BJ (cell line): ENCODE measurements at regions of chr10 and their contacts with region 1.

Region 1: DNA sequence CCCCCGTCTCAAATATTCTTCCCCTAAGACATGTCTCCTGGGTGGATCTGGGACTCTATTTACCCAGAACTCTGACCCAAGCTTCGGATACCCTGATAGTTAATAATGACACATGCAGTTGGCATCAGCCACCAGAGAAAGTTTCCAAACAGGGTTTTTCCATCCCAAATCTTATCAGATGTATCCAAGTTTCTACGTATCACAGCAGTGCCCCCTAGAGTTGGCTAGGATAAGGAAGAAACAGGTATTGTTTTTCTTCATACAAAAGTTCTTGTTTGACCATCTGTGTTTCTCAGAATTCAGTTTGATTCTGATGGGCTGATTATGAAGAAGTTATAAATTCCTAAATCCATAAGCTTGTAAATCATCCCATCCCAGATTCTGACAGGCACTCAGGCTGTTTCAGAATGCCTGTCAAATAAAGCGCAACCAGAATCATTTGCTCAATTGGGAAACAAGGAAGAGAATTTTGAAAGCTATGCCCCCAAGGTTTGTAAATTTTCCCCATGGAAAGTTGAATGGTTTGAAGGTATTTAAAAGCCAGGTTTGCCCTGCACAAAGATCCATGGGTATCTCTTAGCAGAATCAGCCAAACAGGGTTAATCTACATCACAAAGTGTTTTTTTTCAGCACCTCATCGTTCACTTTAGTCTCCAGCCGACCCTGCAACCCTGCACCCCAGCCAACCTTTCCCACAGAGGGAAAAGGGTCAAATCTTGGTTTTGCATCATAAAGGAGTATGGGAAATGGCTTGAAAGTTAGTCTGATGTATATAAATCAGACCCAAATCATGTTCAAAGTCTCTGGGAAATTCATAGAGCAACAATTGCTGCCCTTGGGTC is 47.4 kb downstream of the NRAP start:
- DNase-seq: no peak
- H3K4me3 ChIP-seq: no peak overlapping the region
- H3K27me3 ChIP-seq: peaks cover 15% of the 10 kb centered on the region
- CTCF ChIP-seq: peak; percentile 44

Region 2: GRCh38 chr10:113626809-113627370 is 10.4 kb after region 1 on chr10:
- CTCF ChIA-PET with region 1: interaction called, 14 read pairs
- POLR2A ChIA-PET with region 1: no interaction called
- DNase-seq: no peak
- H3K4me3 ChIP-seq: no peak overlapping the region
- H3K27me3 ChIP-seq: peaks cover 2% of the 10 kb centered on the region
- CTCF ChIP-seq: no peak